ENCODE measurements at regions of chr11 and their contacts with region 1.

Region 1: DNA sequence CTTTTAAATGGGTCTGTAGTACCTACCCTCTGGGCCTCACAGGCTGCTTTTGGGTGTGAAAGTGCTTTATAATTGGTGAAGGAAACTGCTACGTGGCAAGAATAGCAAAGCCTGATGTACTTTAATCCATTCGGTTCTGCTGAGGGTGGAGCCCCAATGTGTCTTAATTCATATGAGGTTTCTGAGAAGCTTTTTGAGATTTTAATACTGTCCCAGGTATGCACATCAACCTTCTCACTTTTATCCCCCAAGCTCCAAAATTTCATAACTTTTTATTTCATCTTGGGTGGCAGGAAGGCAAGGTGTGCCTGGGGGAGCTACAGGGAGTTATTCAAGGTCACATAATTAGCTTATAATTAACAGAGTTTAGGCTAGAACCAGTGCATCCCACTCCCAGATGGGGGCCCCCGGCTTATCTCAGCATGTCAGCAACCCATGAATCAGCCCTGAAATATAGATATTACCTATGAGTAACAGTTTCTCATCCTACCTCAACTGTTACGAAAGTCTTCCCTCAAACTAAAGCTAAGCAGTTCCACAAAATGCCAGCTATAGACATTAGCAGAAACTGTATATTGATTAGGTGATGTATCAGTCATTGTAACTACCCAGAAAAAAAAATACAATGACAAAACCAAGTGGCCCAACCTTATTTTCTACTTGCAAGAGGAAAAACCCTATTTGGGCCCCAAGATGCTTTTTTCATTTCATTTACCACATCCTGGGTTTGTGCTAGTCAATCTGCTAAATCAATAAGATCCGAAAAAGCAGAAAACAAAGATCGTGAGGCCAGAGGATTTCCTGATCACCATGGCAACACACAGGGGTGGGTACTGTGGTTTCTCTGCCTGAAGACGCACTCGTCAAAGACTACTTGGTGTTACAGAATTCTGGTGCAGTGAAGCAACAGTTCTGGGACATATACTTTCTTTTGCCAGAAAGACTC is 26.7 kb downstream of the CD44 start:
- DNase-seq: peak; percentile 39 to 99 (median 98)
- ATAC-seq: peak; percentile 81
- H3K4me3 ChIP-seq: peak overlapping the region; percentile 49
- H3K4me3 Mint-ChIP-seq: peak overlapping the region; percentile 69 to 94 (median 85)
- H3K27ac ChIP-seq: peak overlapping the region; percentile 94
- H3K27ac Mint-ChIP-seq: peak overlapping the region; percentile 89 to 100 (median 100)
- H3K4me1 ChIP-seq: peaks cover 96% of the 10 kb centered on the region in 2 donors
- H3K4me1 Mint-ChIP-seq: peaks cover 66 to 100% (median 100%) of the 10 kb centered on the region in 7 donors
- H3K27me3 ChIP-seq: no peaks in the 10 kb centered on the region
- H3K27me3 Mint-ChIP-seq: no peaks in the 10 kb centered on the region

Region 2: DNA sequence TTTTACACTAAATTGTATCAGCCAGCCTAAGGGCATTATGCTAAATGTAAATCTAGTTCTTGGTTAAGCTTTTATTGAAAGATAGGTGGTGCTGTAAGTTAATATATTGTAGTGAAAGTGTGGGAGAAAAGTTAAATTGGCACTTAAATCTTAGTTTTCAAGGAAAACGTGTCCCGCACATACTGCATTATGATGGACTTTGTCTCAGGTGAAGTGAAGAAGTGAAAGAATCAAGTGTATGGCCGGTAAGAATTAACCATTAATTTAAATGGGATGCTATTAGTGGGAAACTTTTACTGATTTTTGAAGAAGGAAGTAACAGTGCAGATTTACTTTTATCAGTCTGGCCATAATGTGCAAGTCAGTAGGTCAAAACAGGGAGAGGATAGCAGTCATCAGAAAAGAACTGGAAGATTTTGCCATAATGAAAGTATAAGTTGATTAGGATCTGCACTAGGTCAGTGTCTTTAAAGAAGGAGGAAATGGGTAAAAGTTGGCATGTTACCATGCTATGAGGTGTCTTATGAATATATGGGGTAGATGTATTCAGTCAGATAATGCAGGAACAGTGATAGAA is 167.7 kb before region 1 on chr11:
- CTCF ChIA-PET with region 1: interaction called, 4 read pairs
- POLR2A ChIA-PET with region 1: interaction called, 6 read pairs
- intact Hi-C with region 1: loop called (anchors 1 kb)
- DNase-seq: peak in 6 of 9 donors; percentile 27 to 54 (median 44)
- ATAC-seq: peak; percentile 72
- H3K4me3 ChIP-seq: no peak overlapping the region
- H3K4me3 Mint-ChIP-seq: peak overlapping the region in 9 of 10 donors; percentile 6 to 81 (median 34)
- H3K27ac ChIP-seq: peak overlapping the region; percentile 8
- H3K27ac Mint-ChIP-seq: peak overlapping the region; percentile 15 to 90 (median 69)
- H3K4me1 ChIP-seq: peaks cover 15 to 19% of the 10 kb centered on the region in 2 donors
- H3K4me1 Mint-ChIP-seq: peaks cover 19 to 38% (median 35%) of the 10 kb centered on the region in 7 donors
- H3K27me3 ChIP-seq: no peaks in the 10 kb centered on the region
- H3K27me3 Mint-ChIP-seq: no peaks in the 10 kb centered on the region

Region 3: GRCh38 chr11:35082321-35083182 is 83.1 kb before region 1 on chr11:
- CTCF ChIA-PET with region 1: interaction called, 4 read pairs
- POLR2A ChIA-PET with region 1: interaction called, 14 read pairs
- intact Hi-C with region 1: loop called (anchors 1 kb)
- DNase-seq: peak; percentile 76 to 94 (median 92)
- ATAC-seq: peak; percentile 86
- H3K4me3 ChIP-seq: peak overlapping the region; percentile 55
- H3K4me3 Mint-ChIP-seq: peak overlapping the region; percentile 78 to 89 (median 86)
- H3K27ac ChIP-seq: peak overlapping the region; percentile 95
- H3K27ac Mint-ChIP-seq: peak overlapping the region; percentile 89 to 100 (median 99)
- H3K4me1 ChIP-seq: peaks cover 64 to 78% of the 10 kb centered on the region in 2 donors
- H3K4me1 Mint-ChIP-seq: peaks cover 61 to 100% (median 95%) of the 10 kb centered on the region in 7 donors
- H3K27me3 ChIP-seq: no peaks in the 10 kb centered on the region
- H3K27me3 Mint-ChIP-seq: no peaks in the 10 kb centered on the region

Region 4: GRCh38 chr11:35144136-35144741 is 21.5 kb before region 1 on chr11:
- CTCF ChIA-PET with region 1: interaction called, 12 read pairs
- POLR2A ChIA-PET with region 1: interaction called, 185 read pairs
- intact Hi-C with region 1: loop called (anchors 1 kb)
- DNase-seq: peak in 8 of 9 donors; percentile 59 to 85 (median 74)
- ATAC-seq: peak; percentile 59
- H3K4me3 ChIP-seq: peak overlapping the region; percentile 97
- H3K4me3 Mint-ChIP-seq: peak overlapping the region; percentile 83 to 99 (median 94)
- H3K27ac ChIP-seq: peak overlapping the region; percentile 88
- H3K27ac Mint-ChIP-seq: peak overlapping the region; percentile 79 to 100 (median 92)
- H3K4me1 ChIP-seq: peaks cover 68 to 74% of the 10 kb centered on the region in 2 donors
- H3K4me1 Mint-ChIP-seq: peaks cover 62 to 83% (median 77%) of the 10 kb centered on the region in 7 donors
- H3K27me3 ChIP-seq: no peaks in the 10 kb centered on the region
- H3K27me3 Mint-ChIP-seq: no peaks in the 10 kb centered on the region

Region 5: DNA sequence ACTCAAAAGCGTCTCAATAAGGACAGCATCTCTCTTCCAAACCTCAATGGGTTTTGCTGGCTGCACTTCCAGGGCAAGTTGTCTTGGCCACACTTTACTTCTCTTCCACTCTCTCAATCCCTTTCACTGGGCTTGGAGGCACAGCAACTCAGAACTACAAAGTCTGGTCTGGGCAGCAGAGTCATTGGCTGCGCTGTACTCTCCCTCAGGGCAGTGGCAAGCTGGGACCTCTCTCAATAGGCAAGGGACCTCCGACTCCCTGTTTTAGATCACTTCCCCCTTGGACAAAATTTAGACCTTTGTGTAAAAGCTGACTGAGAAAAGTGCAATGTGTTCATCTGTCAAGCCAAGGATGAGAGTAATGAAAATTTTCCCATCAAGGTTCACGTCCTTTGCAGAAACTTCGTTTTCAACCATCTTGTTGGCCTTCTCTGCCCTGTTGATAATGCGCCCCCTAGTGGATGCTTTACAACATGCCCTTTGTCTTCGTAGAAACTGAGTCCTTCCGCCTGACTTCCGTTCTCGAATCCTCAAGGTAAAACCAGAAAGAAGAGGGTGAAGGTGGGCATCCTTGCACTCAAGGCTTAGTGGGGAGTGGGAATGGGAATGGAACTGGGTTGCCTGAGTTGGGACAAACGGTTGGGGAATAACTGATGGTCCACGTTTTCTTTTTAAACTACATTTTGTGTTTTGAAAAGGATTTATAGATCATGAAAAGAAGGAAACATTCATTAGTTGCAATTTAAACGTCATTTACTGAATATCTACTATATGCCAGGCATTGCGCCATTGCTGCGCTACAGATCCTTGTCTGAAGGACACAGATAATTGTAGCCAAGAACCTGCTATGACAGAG is 72.4 kb after region 1 on chr11:
- CTCF ChIA-PET with region 1: interaction called, 3 read pairs
- POLR2A ChIA-PET with region 1: interaction called, 11 read pairs
- intact Hi-C with region 1: loop called (anchors 1 kb)
- DNase-seq: peak in 7 of 9 donors; percentile 28 to 69 (median 47)
- ATAC-seq: peak; percentile 46
- H3K4me3 ChIP-seq: no peak overlapping the region
- H3K4me3 Mint-ChIP-seq: peak overlapping the region in 5 of 10 donors; percentile 20 to 74 (median 61)
- H3K27ac ChIP-seq: no peak overlapping the region
- H3K27ac Mint-ChIP-seq: peak overlapping the region; percentile 39 to 90 (median 73)
- H3K4me1 ChIP-seq: peaks cover 40 to 46% of the 10 kb centered on the region in 2 donors
- H3K4me1 Mint-ChIP-seq: peaks cover 51 to 94% (median 80%) of the 10 kb centered on the region in 7 donors
- H3K27me3 ChIP-seq: no peaks in the 10 kb centered on the region
- H3K27me3 Mint-ChIP-seq: peaks cover 0 to 9% (median 0%) of the 10 kb centered on the region in 5 donors

Region 6: GRCh38 chr11:35330931-35331330 is 165.2 kb after region 1 on chr11:
- CTCF ChIA-PET with region 1: interaction called, 4 read pairs
- POLR2A ChIA-PET with region 1: interaction called, 4 read pairs
- intact Hi-C with region 1: loop called in 1 of 2 experiments (anchors 2 kb)
- DNase-seq: peak in 8 of 9 donors; percentile 39 to 78 (median 68)
- ATAC-seq: peak; percentile 91
- H3K4me3 ChIP-seq: no peak overlapping the region
- H3K4me3 Mint-ChIP-seq: peak overlapping the region in 9 of 10 donors; percentile 2 to 68 (median 61)
- H3K27ac ChIP-seq: peak overlapping the region; percentile 69
- H3K27ac Mint-ChIP-seq: peak overlapping the region; percentile 88 to 98 (median 90)
- H3K4me1 ChIP-seq: peaks cover 37 to 51% of the 10 kb centered on the region in 2 donors
- H3K4me1 Mint-ChIP-seq: peaks cover 36 to 76% (median 67%) of the 10 kb centered on the region in 7 donors
- H3K27me3 ChIP-seq: no peaks in the 10 kb centered on the region
- H3K27me3 Mint-ChIP-seq: no peaks in the 10 kb centered on the region

Region 7: GRCh38 chr11:35485656-35486322 is 320.1 kb after region 1 on chr11:
- CTCF ChIA-PET with region 1: interaction called, 3 read pairs
- POLR2A ChIA-PET with region 1: no interaction called
- intact Hi-C with region 1: loop called in 1 of 2 experiments (anchors 10 kb)
- DNase-seq: peak; percentile 35 to 71 (median 52)
- ATAC-seq: peak; percentile 84
- H3K4me3 ChIP-seq: no peak overlapping the region
- H3K4me3 Mint-ChIP-seq: no peak overlapping the region
- H3K27ac ChIP-seq: no peak overlapping the region
- H3K27ac Mint-ChIP-seq: no peak overlapping the region
- H3K4me1 ChIP-seq: no peaks in the 10 kb centered on the region
- H3K4me1 Mint-ChIP-seq: peaks cover 0 to 3% (median 0%) of the 10 kb centered on the region in 7 donors
- H3K27me3 ChIP-seq: no peaks in the 10 kb centered on the region
- H3K27me3 Mint-ChIP-seq: peaks cover 30 to 52% (median 48%) of the 10 kb centered on the region in 5 donors

Measured in naive thymus-derived CD4-positive, alpha-beta T cell (primary cell).